Posterior vena cava (tissue), 2 donors: ENCODE measurements at regions of chr10 and their contacts with region 1.

Region 1: GRCh38 chr10:93471110-93471651 is 11.0 kb downstream of the MYOF start:
- DNase-seq: no peak

Region 2: GRCh38 chr10:93420091-93420490 is 51.1 kb before region 1 on chr10:
- intact Hi-C with region 1: loop called in 1 of 2 experiments (anchors 10 kb)
- DNase-seq: no peak

Region 3: DNA sequence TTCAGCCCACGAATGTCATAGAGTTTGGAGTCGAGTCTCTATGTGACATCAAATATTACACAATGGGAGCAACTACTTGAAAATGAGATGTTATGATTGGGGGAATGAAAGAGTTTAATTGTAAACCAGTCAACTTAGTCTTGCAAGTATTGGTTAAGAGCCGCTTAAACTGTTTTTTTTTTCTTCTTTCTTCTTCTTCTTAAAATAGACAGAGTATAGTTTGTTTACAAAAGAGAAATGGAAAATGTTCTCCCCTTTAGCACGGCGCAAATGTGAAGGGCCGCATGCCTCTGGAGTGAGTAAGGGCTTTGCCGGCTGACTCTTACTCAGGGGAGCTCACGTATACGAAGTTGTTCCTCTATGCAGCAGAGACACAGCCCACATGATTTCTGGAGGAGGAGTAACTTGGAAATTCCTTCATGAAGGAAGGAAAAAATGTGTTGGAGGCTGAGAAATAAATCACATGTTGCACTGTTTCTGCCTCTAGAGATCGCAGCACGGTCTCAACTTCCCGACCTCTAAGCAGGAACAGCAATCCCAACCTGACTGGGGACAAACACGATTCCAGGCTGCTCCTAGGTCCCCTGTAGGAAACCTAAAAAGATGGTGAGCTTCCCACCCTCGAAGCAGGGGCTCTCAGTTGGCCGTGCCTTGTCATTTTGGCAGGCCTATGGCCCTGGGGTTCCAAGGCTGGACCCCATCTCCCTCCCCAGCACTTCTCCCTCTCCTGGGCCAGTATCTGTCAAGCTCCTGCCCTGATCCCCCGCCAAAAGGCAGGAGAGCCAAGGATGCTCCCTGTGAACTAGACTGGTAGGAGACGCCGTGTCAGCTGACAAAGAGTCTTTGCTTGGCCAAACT is 33.9 kb before region 1 on chr10:
- intact Hi-C with region 1: loop called in 1 of 2 experiments (anchors 5 kb)
- DNase-seq: peak; percentile 94